ENCODE measurements at regions of chr17 and their contacts with region 1.

Region 1: DNA sequence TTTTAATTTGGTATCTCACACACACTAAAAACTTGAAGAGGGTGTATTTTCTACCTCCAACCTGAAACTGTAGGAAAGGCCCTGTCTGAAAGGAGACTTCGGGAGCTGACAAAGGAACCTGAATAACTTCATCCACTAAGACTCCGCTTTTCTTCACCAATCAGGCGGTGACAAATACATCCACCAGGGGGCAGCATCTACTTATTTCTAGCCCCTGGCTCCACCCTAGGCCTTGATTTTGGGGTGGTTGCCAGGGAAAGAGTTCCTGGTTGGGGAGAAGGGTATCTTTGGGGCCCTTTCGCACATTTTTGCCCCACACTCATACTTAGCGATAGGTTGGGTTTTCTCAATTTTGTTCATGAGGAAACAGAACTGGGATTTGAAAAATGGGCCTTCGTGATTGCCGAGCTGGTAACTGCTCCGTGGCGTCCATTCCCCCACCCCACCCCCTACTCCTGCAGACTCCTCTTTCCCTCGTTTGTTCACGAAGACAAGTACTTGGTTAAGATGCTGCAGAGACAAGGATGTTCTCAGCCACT is 4.8 kb upstream of the ARL4D start:
- DNase-seq: peak; percentile 97
- H3K4me3 ChIP-seq: peak overlapping the region in 1 of 2 donors; percentile 47
- H3K27ac ChIP-seq: peak overlapping the region; percentile 7 to 36
- H3K4me1 ChIP-seq: peaks cover 5% of the 10 kb centered on the region
- H3K27me3 ChIP-seq: no peaks in the 10 kb centered on the region
- CTCF ChIP-seq: peak; percentile 96 to 99 (median 99)
- POLR2A ChIP-seq: no peak

Region 2: DNA sequence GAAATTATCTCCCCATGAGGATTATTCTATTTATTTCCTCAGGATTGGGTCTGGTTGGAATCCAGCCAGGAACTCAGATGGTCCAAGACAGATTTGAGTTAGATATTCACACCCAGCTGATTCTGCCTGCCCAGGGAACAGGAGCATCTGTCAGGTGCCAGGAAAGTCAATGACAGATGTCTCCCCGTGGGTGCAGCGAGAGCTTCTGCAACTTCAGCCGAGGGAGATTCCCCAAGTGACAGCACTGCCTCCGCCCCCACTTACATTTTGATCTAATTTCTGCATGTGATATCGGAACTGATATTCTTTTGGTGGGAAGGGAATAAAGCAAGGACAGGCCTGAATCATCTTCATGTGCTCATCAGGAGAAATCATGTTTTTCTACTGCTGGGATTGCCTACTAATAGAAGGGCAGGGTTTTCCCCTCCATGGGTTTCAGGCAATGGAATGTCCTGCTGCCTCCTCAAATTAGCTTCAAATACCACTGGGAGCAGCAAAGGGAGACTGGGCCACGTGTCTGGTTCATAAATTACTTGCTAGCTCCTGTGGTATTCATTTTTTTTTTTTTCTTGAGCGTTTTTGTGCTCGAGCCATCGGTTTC is 74.1 kb after region 1 on chr17:
- intact Hi-C with region 1: no loop called
- DNase-seq: no peak
- H3K4me3 ChIP-seq: no peak overlapping the region
- H3K27ac ChIP-seq: no peak overlapping the region
- H3K4me1 ChIP-seq: no peaks in the 10 kb centered on the region
- H3K27me3 ChIP-seq: no peaks in the 10 kb centered on the region
- CTCF ChIP-seq: no peak
- POLR2A ChIP-seq: no peak

Region 3: GRCh38 chr17:43483674-43484372 is 89.8 kb after region 1 on chr17 and contains the start of gene DHX8:
- intact Hi-C with region 1: loop called (anchors 2 kb)
- DNase-seq: peak; percentile 98
- H3K4me3 ChIP-seq: peak within 1 kb of the TSS; percentile 79 to 89
- H3K27ac ChIP-seq: peak within 1 kb of the TSS; percentile 64 to 79
- H3K4me1 ChIP-seq: peaks cover 25% of the 10 kb centered on the region
- H3K27me3 ChIP-seq: no peaks in the 10 kb centered on the region
- CTCF ChIP-seq: peak; percentile 100
- POLR2A ChIP-seq: no peak
- total RNA-seq, gene DHX8: 68.0 to 74.3 TPM

Region 4: GRCh38 chr17:43803758-43804157 is 409.7 kb after region 1 on chr17:
- intact Hi-C with region 1: no loop called
- DNase-seq: no peak
- H3K4me3 ChIP-seq: no peak overlapping the region
- H3K27ac ChIP-seq: no peak overlapping the region
- H3K4me1 ChIP-seq: no peaks in the 10 kb centered on the region
- H3K27me3 ChIP-seq: no peaks in the 10 kb centered on the region
- CTCF ChIP-seq: no peak
- POLR2A ChIP-seq: no peak